ENCODE measurements at regions of chr18 and their contacts with region 1.

Region 1: DNA sequence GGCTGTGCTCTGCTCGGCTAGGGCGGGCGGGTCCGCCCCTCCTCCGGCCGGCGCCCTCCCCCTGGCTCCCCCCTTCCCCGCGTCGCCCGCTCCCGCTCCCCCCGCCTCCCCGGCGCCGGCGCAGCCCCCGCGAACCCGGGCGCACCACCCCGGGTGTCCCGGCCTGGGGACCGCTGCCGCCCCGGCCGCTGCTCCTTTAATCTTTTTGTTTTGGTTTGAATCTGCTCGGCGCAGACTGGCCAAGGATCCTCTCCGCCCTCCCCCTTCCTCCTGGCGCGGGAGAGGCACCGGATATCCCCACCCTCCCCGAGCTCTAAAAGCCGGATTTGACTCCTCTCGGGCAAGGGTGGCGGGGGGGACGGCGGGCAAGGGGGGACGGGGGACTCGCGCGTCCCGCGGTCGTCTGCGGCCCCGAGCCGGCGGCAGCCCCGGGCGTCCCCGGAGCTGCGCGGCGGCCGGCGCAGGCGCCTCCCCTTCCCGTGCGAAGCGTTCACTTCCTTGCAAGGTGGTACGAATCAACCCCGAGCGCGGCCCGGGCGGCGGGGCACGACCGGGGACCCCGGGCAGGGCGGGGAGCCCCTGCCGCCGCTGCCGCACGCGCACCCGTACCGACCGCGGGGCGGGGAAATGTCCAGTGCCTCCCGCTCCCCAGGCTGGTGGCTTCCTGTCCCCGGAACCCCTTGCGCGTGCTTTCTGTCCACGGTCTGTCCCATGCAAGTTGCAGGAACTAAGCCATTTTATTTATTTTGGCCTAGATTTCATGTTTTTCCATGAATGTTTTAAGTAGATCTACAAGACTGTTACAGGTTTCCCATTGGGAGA is at the start of gene PTGR3:
- DNase-seq: peak; percentile 92
- H3K4me3 Mint-ChIP-seq: peak within 1 kb of the TSS; percentile 97
- H3K27ac Mint-ChIP-seq: peak within 1 kb of the TSS; percentile 98
- H3K4me1 Mint-ChIP-seq: peaks cover 51% of the 10 kb centered on the region
- H3K27me3 Mint-ChIP-seq: peaks cover 12% of the 10 kb centered on the region
- total RNA-seq, gene PTGR3: 28.4 to 33.0 TPM

Region 2: GRCh38 chr18:74378179-74378682 is 831.1 kb before region 1 on chr18:
- CTCF ChIA-PET with region 1: no interaction called
- intact Hi-C with region 1: loop called (anchors 10 kb)
- DNase-seq: peak; percentile 50
- H3K4me3 Mint-ChIP-seq: peak overlapping the region; percentile 0
- H3K27ac Mint-ChIP-seq: peak overlapping the region; percentile 3
- H3K4me1 Mint-ChIP-seq: peaks cover 49% of the 10 kb centered on the region
- H3K27me3 Mint-ChIP-seq: no peaks in the 10 kb centered on the region

Region 3: GRCh38 chr18:74951165-74951760 is 258.1 kb before region 1 on chr18:
- CTCF ChIA-PET with region 1: no interaction called
- intact Hi-C with region 1: loop called (anchors 5 kb)
- DNase-seq: peak; percentile 47
- H3K4me3 Mint-ChIP-seq: no peak overlapping the region
- H3K27ac Mint-ChIP-seq: peak overlapping the region; percentile 18
- H3K4me1 Mint-ChIP-seq: peaks cover 22% of the 10 kb centered on the region
- H3K27me3 Mint-ChIP-seq: no peaks in the 10 kb centered on the region

Region 4: DNA sequence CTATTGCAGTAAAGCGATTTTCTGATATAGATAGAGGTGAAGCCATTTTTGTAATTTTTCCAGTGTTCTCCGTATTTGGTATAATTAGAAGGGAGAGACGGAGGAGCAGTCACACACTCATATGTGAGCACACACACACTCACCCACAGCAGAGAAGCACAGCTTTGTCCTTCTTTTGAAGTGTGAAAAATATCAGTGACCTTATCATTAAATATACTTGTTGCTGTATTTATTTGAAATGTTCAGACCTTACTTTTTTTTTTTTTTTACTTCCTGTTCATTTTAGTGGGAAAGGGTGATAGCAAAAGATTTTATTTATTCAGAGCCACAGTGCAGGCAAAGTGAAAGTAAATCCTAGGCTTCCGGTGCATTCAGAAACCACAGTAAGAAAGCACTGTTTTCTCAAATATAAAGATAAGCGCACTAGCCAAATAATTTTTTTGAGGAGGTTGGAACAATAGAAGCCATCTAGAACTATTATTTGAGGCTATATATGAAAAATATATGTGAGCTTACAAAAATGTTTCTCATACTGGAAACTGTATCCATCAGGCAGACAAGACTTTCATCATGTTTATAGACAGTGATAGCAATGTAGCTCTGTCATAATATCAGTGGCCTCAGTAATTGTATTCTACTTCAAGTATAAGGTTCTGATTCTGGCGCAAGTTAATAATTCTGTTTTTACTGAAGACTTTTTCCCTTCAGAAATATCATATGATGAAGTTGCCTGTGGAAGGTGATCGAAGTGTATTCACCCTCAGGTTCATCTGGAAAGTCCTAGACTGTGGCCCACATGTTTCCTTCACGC is 38.5 kb after region 1 on chr18:
- CTCF ChIA-PET with region 1: interaction called, 7 read pairs
- intact Hi-C with region 1: loop called (anchors 1 kb)
- DNase-seq: peak; percentile 36
- H3K4me3 Mint-ChIP-seq: peak overlapping the region; percentile 77
- H3K27ac Mint-ChIP-seq: peak overlapping the region; percentile 93
- H3K4me1 Mint-ChIP-seq: peaks cover 60% of the 10 kb centered on the region
- H3K27me3 Mint-ChIP-seq: no peaks in the 10 kb centered on the region

Region 5: DNA sequence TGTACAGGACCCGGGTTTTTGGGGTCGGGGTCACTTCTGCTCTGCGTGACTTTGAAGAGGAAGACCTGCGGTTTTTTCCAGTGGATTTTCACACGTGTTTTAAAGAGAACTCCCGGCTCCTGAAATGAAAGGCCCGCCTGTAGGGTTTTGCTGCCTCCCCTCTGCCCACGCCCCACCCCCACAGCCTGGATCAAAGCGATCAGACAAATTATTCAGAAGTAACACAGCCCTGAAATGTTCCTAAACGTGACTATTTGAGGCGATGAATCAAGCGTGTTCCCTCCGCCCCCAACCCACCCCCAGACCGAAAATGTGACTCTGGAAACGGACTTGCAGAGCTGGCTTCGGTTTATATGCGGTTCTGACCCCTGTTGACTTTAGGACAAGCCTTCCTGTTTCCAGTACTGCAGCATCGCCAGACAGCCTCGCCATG is 246.9 kb after region 1 on chr18:
- CTCF ChIA-PET with region 1: no interaction called
- intact Hi-C with region 1: no loop called
- DNase-seq: peak; percentile 15
- H3K4me3 Mint-ChIP-seq: peak overlapping the region; percentile 62
- H3K27ac Mint-ChIP-seq: no peak overlapping the region
- H3K4me1 Mint-ChIP-seq: peaks cover 6% of the 10 kb centered on the region
- H3K27me3 Mint-ChIP-seq: peaks cover 26% of the 10 kb centered on the region

Region 6: GRCh38 chr18:75517286-75517685 is 307.9 kb after region 1 on chr18:
- CTCF ChIA-PET with region 1: no interaction called
- intact Hi-C with region 1: no loop called
- DNase-seq: no peak
- H3K4me3 Mint-ChIP-seq: no peak overlapping the region
- H3K27ac Mint-ChIP-seq: no peak overlapping the region
- H3K4me1 Mint-ChIP-seq: no peaks in the 10 kb centered on the region
- H3K27me3 Mint-ChIP-seq: peaks cover 7% of the 10 kb centered on the region

Region 7: DNA sequence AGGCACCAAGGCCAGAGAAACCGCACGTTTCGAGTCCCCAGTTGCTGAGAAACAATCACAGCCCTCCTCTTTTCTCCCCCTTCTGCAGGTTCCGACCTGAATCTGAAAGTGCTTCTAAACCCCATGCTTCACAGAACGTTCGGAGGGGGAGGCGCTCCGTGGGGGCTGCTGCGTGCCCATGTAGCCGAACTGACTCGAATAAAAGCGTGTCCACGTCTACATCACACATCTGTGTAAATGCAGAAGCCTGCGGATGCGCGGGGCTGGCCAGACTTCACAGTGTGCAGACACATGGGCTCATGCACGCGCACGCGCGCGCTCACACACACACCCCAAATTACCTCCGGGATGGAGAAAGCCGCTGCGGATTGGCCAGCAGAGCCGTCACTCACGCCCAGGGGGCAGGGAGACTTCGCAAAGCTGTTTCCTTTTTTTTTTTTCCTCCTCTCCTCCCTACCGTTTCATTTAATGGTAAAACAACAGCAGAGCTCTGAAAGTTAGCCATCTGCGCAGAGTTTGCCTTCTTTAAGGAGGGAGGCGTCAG is 1283.4 kb after region 1 on chr18:
- CTCF ChIA-PET with region 1: no interaction called
- intact Hi-C with region 1: loop called (anchors 2 kb)
- DNase-seq: peak; percentile 100
- H3K4me3 Mint-ChIP-seq: peak overlapping the region; percentile 93
- H3K27ac Mint-ChIP-seq: peak overlapping the region; percentile 74
- H3K4me1 Mint-ChIP-seq: peaks cover 23% of the 10 kb centered on the region
- H3K27me3 Mint-ChIP-seq: peaks cover 14% of the 10 kb centered on the region

Measured in activated naive CD4-positive, alpha-beta T cell treated with anti-CD3 and anti-CD28 coated beads for 36 hours (primary cell).